Transverse colon (tissue), 4 donors: ENCODE measurements at regions of chr3 and their contacts with region 1.

Region 1: GRCh38 chr3:129266651-129267050 is 12.0 kb upstream of the HMCES start:
- DNase-seq: no peak
- H3K4me3 ChIP-seq: no peak overlapping the region
- H3K27ac ChIP-seq: no peak overlapping the region
- H3K4me1 ChIP-seq: no peaks in the 10 kb centered on the region
- H3K27me3 ChIP-seq: no peaks in the 10 kb centered on the region
- CTCF ChIP-seq: no peak
- EP300 ChIP-seq: no peak
- POLR2A ChIP-seq: no peak

Region 2: DNA sequence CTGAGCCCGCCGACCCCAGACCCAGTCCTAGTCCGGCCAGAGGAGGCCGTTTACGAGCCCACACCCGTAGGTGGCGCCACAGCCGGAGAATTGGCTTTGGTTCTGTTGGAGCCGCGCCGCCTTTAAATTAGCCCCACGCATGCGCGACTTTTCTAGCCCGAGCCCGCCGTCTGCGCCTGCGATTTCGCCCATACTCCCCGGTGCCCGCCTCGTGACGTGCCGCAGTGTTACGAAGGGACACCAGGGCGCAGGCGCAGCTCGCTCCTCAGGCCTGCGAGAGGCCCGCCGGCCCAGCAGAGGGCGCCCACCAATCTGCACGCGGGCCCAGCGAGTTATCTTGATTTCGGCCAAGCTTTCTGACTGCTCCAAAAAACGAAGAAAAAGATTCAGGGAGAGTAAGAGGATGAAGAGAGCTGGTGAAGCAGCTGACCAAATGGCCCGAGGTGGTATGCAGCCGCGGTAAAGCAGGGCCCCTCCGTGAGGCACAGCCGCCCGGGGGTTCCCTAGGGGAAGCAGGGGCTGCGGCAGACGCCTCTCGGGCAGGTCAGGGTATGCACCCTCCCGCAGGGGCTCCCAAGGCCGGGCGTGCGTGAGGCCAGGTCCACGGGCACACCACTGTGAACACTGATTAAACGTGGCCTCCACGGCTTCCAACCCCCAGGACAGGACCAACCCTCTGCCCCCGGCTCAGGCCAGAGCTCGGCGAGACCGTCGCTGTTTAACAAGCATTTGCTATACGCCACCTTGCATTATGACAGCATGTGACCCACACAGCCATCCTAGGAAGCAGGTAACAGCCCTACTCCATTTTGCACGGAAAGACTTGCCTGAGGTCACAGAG is 648.9 kb before region 1 on chr3:
- in situ Hi-C with region 1: no loop called
- intact Hi-C with region 1: loop called (anchors 5 kb)
- DNase-seq: peak; percentile 99
- H3K4me3 ChIP-seq: peak overlapping the region; percentile 67 to 79 (median 70)
- H3K27ac ChIP-seq: peak overlapping the region; percentile 83 to 91 (median 89)
- H3K4me1 ChIP-seq: peaks cover 10 to 18% (median 14%) of the 10 kb centered on the region in 4 donors
- H3K27me3 ChIP-seq: no peaks in the 10 kb centered on the region
- CTCF ChIP-seq: peak; percentile 88 to 99 (median 95)
- EP300 ChIP-seq: no peak
- POLR2A ChIP-seq: peak; percentile 58

Region 3: DNA sequence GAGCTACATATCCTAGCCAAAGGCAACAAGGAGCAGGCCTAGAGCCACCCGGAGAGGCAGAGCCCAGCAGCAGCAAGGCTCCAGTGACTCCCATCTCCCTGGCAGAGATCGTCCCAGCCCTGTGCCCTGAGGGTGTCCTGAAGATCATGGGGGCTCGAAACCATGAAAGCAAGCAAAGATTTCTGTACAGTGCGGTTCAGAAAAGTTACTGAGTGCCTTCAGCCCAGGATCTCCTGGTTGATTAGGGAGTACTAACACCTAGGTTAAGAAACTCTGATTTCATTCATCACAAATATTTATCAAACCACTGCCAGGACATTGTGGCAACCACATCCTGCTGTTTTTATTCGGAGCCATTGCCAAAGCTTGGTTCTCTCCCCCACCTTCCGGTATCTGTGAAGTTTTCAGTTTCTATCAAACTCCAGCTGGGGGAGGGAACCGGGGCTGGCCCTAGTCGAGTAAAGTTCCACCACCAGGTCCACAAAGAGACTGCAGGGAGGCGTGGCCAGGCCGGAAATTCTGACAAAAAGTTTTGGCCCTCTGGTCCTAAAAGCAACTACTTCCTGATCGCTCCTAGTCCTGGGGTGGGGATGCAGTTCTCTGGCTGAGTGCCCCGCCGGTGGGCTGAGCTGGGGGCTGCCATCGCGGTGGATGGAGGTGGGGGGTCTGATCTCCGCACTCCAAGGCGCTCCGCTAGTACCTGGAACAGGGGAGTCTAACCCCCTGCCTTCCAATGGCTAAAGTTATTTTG is 146.2 kb before region 1 on chr3:
- in situ Hi-C with region 1: no loop called
- intact Hi-C with region 1: no loop called
- DNase-seq: peak; percentile 93
- H3K4me3 ChIP-seq: peak overlapping the region; percentile 72 to 89 (median 74)
- H3K27ac ChIP-seq: peak overlapping the region; percentile 92 to 98 (median 97)
- H3K4me1 ChIP-seq: peaks cover 18 to 63% (median 55%) of the 10 kb centered on the region in 4 donors
- H3K27me3 ChIP-seq: no peaks in the 10 kb centered on the region
- CTCF ChIP-seq: peak in 3 of 5 experiments; percentile 39 to 58 (median 54)
- EP300 ChIP-seq: no peak
- POLR2A ChIP-seq: peak; percentile 83

Region 4: GRCh38 chr3:129665024-129665768 is 398.5 kb after region 1 on chr3:
- in situ Hi-C with region 1: no loop called
- intact Hi-C with region 1: no loop called
- DNase-seq: no peak
- H3K4me3 ChIP-seq: no peak overlapping the region
- H3K27ac ChIP-seq: no peak overlapping the region
- H3K4me1 ChIP-seq: peaks cover 0 to 21% (median 5%) of the 10 kb centered on the region in 4 donors
- H3K27me3 ChIP-seq: no peaks in the 10 kb centered on the region
- CTCF ChIP-seq: no peak
- EP300 ChIP-seq: no peak
- POLR2A ChIP-seq: no peak